ENCODE measurements at regions of chr1 and their contacts with region 1.

Region 1: GRCh38 chr1:205750138-205751035 is at the start of gene NUCKS1:
- DNase-seq: peak; percentile 98
- H3K4me3 ChIP-seq: peak within 1 kb of the TSS; percentile 64 to 86 (median 77)
- H3K27ac ChIP-seq: peak within 1 kb of the TSS; percentile 97
- H3K4me1 ChIP-seq: peaks cover 28% of the 10 kb centered on the region
- H3K27me3 ChIP-seq: peaks cover 8 to 14% of the 10 kb centered on the region in 2 experiments
- CTCF ChIP-seq: no peak
- POLR2A ChIP-seq: no peak
- total RNA-seq, gene NUCKS1: 282 and 288 TPM in 2 replicates

Region 2: DNA sequence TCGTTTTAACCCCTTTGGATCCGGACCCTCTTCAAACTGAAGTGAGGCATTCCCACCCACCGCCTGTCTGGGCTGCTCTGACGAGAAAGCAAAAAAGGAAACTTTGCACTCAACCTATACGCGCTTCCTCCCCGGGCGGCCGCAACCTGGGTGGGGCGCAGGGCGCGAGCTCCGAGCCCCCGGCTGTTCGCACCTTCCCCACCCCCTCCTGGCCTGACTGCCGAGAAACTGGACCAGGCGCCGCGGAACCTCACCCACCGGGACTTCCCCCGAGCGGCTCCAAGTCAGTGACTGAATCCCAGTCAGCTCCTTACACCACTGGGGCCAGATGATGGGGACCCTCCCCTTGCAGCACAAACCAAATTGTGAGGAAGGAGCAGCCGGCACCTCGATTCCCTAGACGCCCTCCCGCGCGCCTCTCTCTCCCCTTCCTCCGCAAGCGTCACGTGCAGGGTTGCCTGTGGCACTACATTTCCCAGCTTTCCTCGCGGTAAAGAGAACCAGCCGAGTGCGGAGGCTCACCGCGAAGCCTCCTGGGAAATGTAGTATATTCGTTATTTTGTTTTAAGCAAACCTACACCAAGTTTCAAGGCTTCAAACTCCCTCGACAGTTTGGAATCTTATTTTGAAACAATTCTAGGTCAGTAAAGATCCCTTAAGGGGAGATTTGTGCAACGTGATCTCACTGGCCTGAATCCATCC is 24.8 kb after region 1 on chr1 and contains the start of gene RAB29:
- CTCF ChIA-PET with region 1: interaction called, 9 read pairs
- POLR2A ChIA-PET with region 1: no interaction called
- dilution Hi-C with region 1: no loop called
- intact Hi-C with region 1: loop called (anchors 1 kb)
- DNase-seq: peak; percentile 89
- H3K4me3 ChIP-seq: peak within 1 kb of the TSS; percentile 55 to 88 (median 59)
- H3K27ac ChIP-seq: peak within 1 kb of the TSS; percentile 1
- H3K4me1 ChIP-seq: peaks cover 8% of the 10 kb centered on the region
- H3K27me3 ChIP-seq: no peaks in the 10 kb centered on the region
- CTCF ChIP-seq: no peak
- POLR2A ChIP-seq: peak; percentile 49
- total RNA-seq, gene RAB29: 18.8 and 23.0 TPM in 2 replicates

Region 3: GRCh38 chr1:206982216-206982615 is 1231.8 kb after region 1 on chr1:
- CTCF ChIA-PET with region 1: no interaction called
- POLR2A ChIA-PET with region 1: no interaction called
- dilution Hi-C with region 1: no loop called
- intact Hi-C with region 1: no loop called
- DNase-seq: peak; percentile 27
- H3K4me3 ChIP-seq: no peak overlapping the region
- H3K27ac ChIP-seq: no peak overlapping the region
- H3K4me1 ChIP-seq: no peaks in the 10 kb centered on the region
- H3K27me3 ChIP-seq: peaks cover 6 to 12% of the 10 kb centered on the region in 2 experiments
- CTCF ChIP-seq: peak; percentile 27 to 44
- POLR2A ChIP-seq: no peak

Measured in endothelial cell of umbilical vein (primary cell).